Heart left ventricle (tissue), 16 donors: ENCODE measurements at regions of chr13 and their contacts with region 1.

Region 1: GRCh38 chr13:76903544-76904162 is 17.4 kb upstream of the KCTD12 start:
- DNase-seq: peak; percentile 47 to 67 (median 54)
- ATAC-seq: peak; percentile 64 to 83 (median 79)
- H3K4me3 ChIP-seq: no peak overlapping the region
- H3K27ac ChIP-seq: no peak overlapping the region
- H3K4me1 ChIP-seq: no peaks in the 10 kb centered on the region
- H3K27me3 ChIP-seq: peaks cover 0 to 3% (median 0%) of the 10 kb centered on the region in 9 donors
- CTCF ChIP-seq: peak; percentile 95 to 100 (median 99)
- POLR2A ChIP-seq: no peak

Region 2: GRCh38 chr13:75870397-75870903 is 1033.2 kb before region 1 on chr13:
- intact Hi-C with region 1: loop called in 6 of 10 experiments (anchors 2 to 5 kb)
- DNase-seq: no peak
- ATAC-seq: peak in 2 of 4 donors; percentile 29 to 45
- H3K4me3 ChIP-seq: peak overlapping the region in 11 of 12 donors; percentile 10 to 62 (median 45)
- H3K27ac ChIP-seq: no peak overlapping the region
- H3K4me1 ChIP-seq: peaks cover 0 to 8% (median 0%) of the 10 kb centered on the region in 12 donors
- H3K27me3 ChIP-seq: no peaks in the 10 kb centered on the region
- CTCF ChIP-seq: peak; percentile 66 to 84 (median 74)
- POLR2A ChIP-seq: no peak

Region 3: DNA sequence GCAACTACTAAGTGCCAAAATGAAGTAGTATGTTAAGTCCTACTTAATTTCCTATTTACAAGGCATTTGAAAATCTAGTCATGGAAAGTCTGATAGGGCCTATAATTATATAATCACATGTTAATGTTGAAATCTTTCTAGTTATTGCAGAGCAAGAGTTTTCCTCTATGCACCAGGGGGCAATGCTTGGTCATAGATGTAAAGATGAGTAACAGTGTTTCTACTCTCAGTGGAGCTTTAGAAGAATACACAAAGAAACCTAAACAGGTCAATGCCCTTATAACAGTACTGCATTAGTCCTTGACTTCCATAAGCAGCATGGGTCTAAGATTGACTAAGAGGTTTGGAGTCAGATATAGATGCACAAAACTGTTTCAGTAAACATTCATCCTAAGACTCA is 236.1 kb before region 1 on chr13:
- intact Hi-C with region 1: loop called in 8 of 10 experiments (anchors 1 to 5 kb)
- DNase-seq: peak in 2 of 5 donors; percentile 24 to 26
- ATAC-seq: peak in 3 of 4 donors; percentile 57 to 71 (median 63)
- H3K4me3 ChIP-seq: no peak overlapping the region
- H3K27ac ChIP-seq: no peak overlapping the region
- H3K4me1 ChIP-seq: peaks cover 0 to 31% (median 0%) of the 10 kb centered on the region in 12 donors
- H3K27me3 ChIP-seq: no peaks in the 10 kb centered on the region
- CTCF ChIP-seq: peak in 11 of 12 donors; percentile 8 to 60 (median 38)
- POLR2A ChIP-seq: no peak